CD4-positive, alpha-beta T cell (primary cell): ENCODE measurements at regions of chr10 and their contacts with region 1.

Region 1: DNA sequence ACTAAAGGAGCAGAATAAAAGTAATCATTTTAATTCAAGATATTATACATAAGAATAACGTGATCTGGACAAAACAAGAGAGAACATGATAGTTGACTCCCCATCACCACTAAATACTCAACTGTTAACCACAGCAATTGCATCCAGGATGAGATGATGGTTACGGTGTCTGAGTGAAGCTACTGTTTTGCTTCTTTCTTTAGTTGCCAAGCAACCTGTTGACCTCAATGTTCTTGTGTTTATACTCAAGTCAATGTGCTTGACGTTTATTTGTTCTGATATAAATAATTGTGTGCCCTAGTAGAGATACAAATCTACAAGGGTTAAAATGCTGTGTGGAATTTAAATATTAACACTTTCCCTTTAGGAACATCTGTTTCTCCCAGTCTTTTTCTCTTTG is 31.4 kb upstream of the MPP7 start:
- DNase-seq: peak in 8 of 14 experiments; percentile 17 to 97 (median 52)
- ATAC-seq: peak; percentile 68
- H3K4me3 ChIP-seq: peak overlapping the region; percentile 76
- H3K4me3 Mint-ChIP-seq: peak overlapping the region; percentile 90
- H3K27ac ChIP-seq: peak overlapping the region; percentile 97 to 99
- H3K27ac Mint-ChIP-seq: peak overlapping the region; percentile 98
- H3K4me1 ChIP-seq: peaks cover 64% of the 10 kb centered on the region
- H3K4me1 Mint-ChIP-seq: peaks cover 85% of the 10 kb centered on the region
- H3K27me3 ChIP-seq: no peaks in the 10 kb centered on the region
- H3K27me3 Mint-ChIP-seq: no peaks in the 10 kb centered on the region
- CTCF ChIP-seq: no peak

Region 2: DNA sequence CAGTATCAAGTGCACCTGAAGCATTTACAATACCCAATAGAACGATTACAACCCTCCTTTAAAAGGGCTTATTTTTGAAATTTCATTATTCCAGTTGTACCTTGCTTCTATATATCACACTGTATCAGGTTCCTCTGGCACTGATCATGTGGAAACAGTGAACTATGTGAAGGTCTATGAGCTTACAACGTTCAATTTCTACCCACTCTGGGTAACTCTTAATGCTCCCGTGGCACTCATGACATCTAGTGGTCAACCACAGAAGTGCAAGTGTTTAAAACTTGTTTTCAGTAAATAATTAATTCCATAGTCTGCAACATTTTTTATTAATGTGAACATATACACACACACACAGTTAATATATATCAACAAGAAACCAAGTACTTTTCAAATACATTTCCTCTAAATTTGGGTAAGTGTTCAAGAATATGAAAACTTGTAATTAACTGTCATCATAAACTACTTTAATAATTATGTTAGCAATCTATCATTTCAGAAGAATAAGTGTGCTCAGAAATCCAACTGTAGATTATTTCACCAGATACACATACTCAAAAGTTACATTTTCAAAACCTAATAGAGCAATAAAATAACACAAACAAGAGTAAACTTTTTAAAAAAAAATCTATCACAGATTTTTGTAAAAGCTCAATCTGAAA is 92.4 kb before region 1 on chr10:
- CTCF ChIA-PET with region 1: interaction called, 10 read pairs
- POLR2A ChIA-PET with region 1: interaction called, 3 read pairs
- intact Hi-C with region 1: no loop called
- DNase-seq: peak in 8 of 14 experiments; percentile 7 to 74 (median 36)
- ATAC-seq: peak; percentile 78
- H3K4me3 ChIP-seq: no peak overlapping the region
- H3K4me3 Mint-ChIP-seq: no peak overlapping the region
- H3K27ac ChIP-seq: no peak overlapping the region
- H3K27ac Mint-ChIP-seq: no peak overlapping the region
- H3K4me1 ChIP-seq: peaks cover 3% of the 10 kb centered on the region
- H3K4me1 Mint-ChIP-seq: peaks cover 45% of the 10 kb centered on the region
- H3K27me3 ChIP-seq: no peaks in the 10 kb centered on the region
- H3K27me3 Mint-ChIP-seq: no peaks in the 10 kb centered on the region
- CTCF ChIP-seq: peak; percentile 98

Region 3: DNA sequence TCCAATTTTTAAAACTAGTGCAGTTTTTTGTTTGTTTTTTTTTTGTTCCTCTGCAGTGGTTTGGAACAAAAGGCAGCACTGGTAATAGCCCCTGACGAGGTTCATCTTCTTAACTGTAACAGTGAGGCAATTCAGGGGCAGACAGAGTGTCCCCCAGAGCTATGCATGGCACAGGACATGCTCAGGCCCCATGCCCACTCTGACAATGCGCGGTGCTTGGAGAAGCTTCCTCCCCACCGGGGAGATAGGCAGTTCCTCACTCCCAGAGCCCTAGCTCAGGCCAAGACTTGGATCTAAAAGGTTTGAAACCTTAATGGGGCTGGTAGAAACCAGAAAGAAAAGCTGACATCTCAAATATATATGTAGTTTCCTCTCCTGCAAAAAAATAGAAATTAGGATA is 13.5 kb before region 1 on chr10:
- CTCF ChIA-PET with region 1: interaction called, 4 read pairs
- POLR2A ChIA-PET with region 1: interaction called, 14 read pairs
- intact Hi-C with region 1: no loop called
- DNase-seq: no peak
- ATAC-seq: no peak
- H3K4me3 ChIP-seq: no peak overlapping the region
- H3K4me3 Mint-ChIP-seq: no peak overlapping the region
- H3K27ac ChIP-seq: no peak overlapping the region
- H3K27ac Mint-ChIP-seq: no peak overlapping the region
- H3K4me1 ChIP-seq: peaks cover 8% of the 10 kb centered on the region
- H3K4me1 Mint-ChIP-seq: peaks cover 34% of the 10 kb centered on the region
- H3K27me3 ChIP-seq: no peaks in the 10 kb centered on the region
- H3K27me3 Mint-ChIP-seq: no peaks in the 10 kb centered on the region
- CTCF ChIP-seq: no peak

Region 4: DNA sequence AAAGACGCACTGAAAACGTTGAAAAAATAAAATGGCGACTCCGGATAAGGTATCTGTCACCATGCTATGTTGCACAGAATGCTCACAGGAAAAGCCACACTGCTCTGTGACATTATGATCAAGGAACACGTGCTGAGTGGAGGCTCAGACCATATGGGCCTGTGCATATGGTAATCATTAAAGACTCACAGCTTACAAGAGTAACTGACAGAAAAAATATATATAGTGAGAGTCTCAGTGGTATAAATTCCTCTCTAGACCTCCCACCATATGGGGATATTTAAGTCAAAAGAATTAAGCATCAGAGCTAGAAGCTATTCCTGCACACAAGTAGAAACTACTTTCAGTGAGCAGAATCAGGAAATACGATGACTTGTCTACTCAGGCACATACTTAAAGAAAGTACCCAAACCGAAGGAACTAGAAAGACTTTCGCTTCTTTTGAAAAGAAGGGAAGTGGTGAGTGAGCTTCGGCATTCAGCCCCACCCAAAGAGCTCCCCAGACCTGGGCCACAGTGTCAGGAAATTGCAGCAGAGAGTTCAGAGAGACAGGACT is 33.7 kb after region 1 on chr10:
- CTCF ChIA-PET with region 1: interaction called, 9 read pairs
- POLR2A ChIA-PET with region 1: interaction called, 258 read pairs
- intact Hi-C with region 1: loop called in 1 of 2 experiments (anchors 1 kb)
- DNase-seq: peak; percentile 22 to 92 (median 56)
- ATAC-seq: peak; percentile 92
- H3K4me3 ChIP-seq: peak overlapping the region; percentile 6
- H3K4me3 Mint-ChIP-seq: peak overlapping the region; percentile 80
- H3K27ac ChIP-seq: peak overlapping the region; percentile 69 to 79
- H3K27ac Mint-ChIP-seq: peak overlapping the region; percentile 91
- H3K4me1 ChIP-seq: peaks cover 59% of the 10 kb centered on the region
- H3K4me1 Mint-ChIP-seq: peaks cover 58% of the 10 kb centered on the region
- H3K27me3 ChIP-seq: no peaks in the 10 kb centered on the region
- H3K27me3 Mint-ChIP-seq: no peaks in the 10 kb centered on the region
- CTCF ChIP-seq: no peak